ENCODE measurements at regions of chr14 and their contacts with region 1.

Region 1: GRCh38 chr14:43795600-43796228 is 711.4 kb downstream of the FSCB start:
- DNase-seq: peak in 1 of 2 experiments; percentile 7
- H3K4me3 ChIP-seq: no peak overlapping the region
- H3K4me3 Mint-ChIP-seq: no peak overlapping the region
- H3K27ac Mint-ChIP-seq: no peak overlapping the region
- H3K4me1 ChIP-seq: no peaks in the 10 kb centered on the region
- H3K4me1 Mint-ChIP-seq: no peaks in the 10 kb centered on the region
- H3K27me3 ChIP-seq: no peaks in the 10 kb centered on the region
- H3K27me3 Mint-ChIP-seq: no peaks in the 10 kb centered on the region
- CTCF ChIP-seq: peak; percentile 16 to 40

Region 2: DNA sequence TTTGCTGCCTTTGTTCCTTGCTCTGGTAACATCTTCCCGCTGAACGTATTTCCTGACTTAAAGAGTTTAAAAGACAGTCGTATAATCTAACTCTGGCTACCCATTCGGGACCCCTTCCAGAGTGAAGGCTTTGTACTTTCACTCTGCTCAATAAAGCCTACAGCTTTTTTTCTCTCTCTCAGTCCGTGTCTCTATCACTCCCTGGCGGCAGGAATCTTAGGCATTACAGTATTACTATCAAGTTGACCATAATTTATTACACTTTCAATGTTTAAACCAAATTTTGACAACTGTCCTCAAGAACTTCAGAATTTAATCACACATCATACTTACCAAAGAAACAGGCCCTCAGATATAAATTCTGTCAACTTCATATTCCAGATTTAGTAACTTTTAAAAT is 256.5 kb before region 1 on chr14:
- CTCF ChIA-PET with region 1: no interaction called
- POLR2A ChIA-PET with region 1: no interaction called
- intact Hi-C with region 1: loop called (anchors 2 kb)
- DNase-seq: peak; percentile 43 to 45
- H3K4me3 ChIP-seq: no peak overlapping the region
- H3K4me3 Mint-ChIP-seq: peak overlapping the region; percentile 57
- H3K27ac Mint-ChIP-seq: peak overlapping the region; percentile 16
- H3K4me1 ChIP-seq: no peaks in the 10 kb centered on the region
- H3K4me1 Mint-ChIP-seq: peaks cover 11% of the 10 kb centered on the region
- H3K27me3 ChIP-seq: no peaks in the 10 kb centered on the region
- H3K27me3 Mint-ChIP-seq: no peaks in the 10 kb centered on the region
- CTCF ChIP-seq: peak; percentile 37 to 39

Region 3: GRCh38 chr14:43765474-43765873 is 30.2 kb before region 1 on chr14:
- CTCF ChIA-PET with region 1: no interaction called
- POLR2A ChIA-PET with region 1: no interaction called
- intact Hi-C with region 1: no loop called
- DNase-seq: no peak
- H3K4me3 ChIP-seq: no peak overlapping the region
- H3K4me3 Mint-ChIP-seq: no peak overlapping the region
- H3K27ac Mint-ChIP-seq: no peak overlapping the region
- H3K4me1 ChIP-seq: no peaks in the 10 kb centered on the region
- H3K4me1 Mint-ChIP-seq: no peaks in the 10 kb centered on the region
- H3K27me3 ChIP-seq: no peaks in the 10 kb centered on the region
- H3K27me3 Mint-ChIP-seq: no peaks in the 10 kb centered on the region
- CTCF ChIP-seq: no peak

Measured in Caco-2 (cell line).